A673 (cell line): ENCODE measurements at regions of chr3 and their contacts with region 1.

Region 1: DNA sequence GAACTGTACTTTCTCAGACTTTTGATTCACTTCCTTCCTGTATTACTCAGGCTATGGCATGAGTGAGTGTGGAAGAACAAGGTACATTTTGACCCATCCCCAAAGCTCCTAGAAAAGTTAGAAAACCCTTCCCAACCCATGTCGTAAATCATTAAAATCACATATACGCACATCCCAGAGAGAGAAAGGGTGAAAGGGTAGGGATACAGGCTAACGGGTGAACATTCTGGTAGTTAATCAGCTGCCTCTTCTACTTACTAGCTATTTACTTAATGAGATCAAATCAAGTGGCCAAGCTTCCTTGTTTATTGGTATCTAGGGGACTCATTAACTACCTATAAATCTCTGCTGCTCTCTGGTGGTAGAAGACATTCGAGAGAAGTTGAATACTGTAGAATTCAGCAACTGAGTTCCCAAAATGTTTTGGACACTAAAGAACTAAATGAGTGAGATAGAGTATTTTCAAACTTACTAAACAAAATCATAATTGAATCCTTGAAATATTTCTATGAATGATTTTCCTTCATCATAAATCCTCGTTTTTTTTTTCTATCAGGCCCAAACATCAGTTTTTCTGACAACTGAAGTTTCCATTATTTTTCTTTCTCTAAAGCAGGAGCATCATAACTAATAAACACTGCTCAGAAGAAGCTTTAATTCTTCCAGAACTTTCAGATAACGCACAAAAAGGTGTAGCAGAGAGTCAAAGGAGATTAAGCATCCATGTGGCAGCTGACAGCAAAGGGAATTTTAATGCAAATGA is 124.2 kb downstream of the IMPG2 start:
- DNase-seq: peak; percentile 82
- H3K4me3 ChIP-seq: no peak overlapping the region
- H3K27ac ChIP-seq: peak overlapping the region; percentile 35
- H3K4me1 ChIP-seq: peaks cover 31% of the 10 kb centered on the region
- H3K27me3 ChIP-seq: no peaks in the 10 kb centered on the region
- CTCF ChIP-seq: peak; percentile 68

Region 2: GRCh38 chr3:100463002-100463401 is 733.1 kb before region 1 on chr3:
- CTCF ChIA-PET with region 1: interaction called, 16 read pairs
- POLR2A ChIA-PET with region 1: no interaction called
- intact Hi-C with region 1: loop called (anchors 10 kb)
- DNase-seq: peak; percentile 76
- H3K4me3 ChIP-seq: no peak overlapping the region
- H3K27ac ChIP-seq: no peak overlapping the region
- H3K4me1 ChIP-seq: no peaks in the 10 kb centered on the region
- H3K27me3 ChIP-seq: no peaks in the 10 kb centered on the region
- CTCF ChIP-seq: peak; percentile 83

Region 3: GRCh38 chr3:100737334-100737733 is 458.8 kb before region 1 on chr3:
- CTCF ChIA-PET with region 1: interaction called, 3 read pairs
- POLR2A ChIA-PET with region 1: no interaction called
- intact Hi-C with region 1: loop called (anchors 5 kb)
- DNase-seq: peak; percentile 57
- H3K4me3 ChIP-seq: no peak overlapping the region
- H3K27ac ChIP-seq: no peak overlapping the region
- H3K4me1 ChIP-seq: no peaks in the 10 kb centered on the region
- H3K27me3 ChIP-seq: no peaks in the 10 kb centered on the region
- CTCF ChIP-seq: peak; percentile 54

Region 4: DNA sequence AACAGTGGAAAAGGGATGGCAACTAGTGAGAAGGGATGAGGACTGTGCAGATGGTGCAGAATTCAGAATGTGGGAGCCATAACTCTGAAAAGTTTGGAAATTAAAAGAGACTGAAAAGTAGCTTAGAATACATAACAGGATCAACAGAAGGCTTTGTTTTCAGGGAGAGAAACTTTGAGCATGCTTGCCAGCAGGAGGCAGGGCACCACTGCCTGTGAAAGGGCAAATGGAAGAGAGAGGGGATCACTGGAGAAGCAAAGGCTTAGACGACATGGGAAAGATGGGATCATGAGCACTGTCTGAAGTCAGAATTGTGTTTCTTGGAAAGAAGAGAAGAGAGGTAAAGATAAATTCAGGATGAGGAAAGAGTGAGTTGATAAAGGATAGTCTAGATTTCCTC is 302.5 kb before region 1 on chr3:
- CTCF ChIA-PET with region 1: interaction called, 20 read pairs
- POLR2A ChIA-PET with region 1: no interaction called
- intact Hi-C with region 1: loop called (anchors 1 kb)
- DNase-seq: peak; percentile 66
- H3K4me3 ChIP-seq: no peak overlapping the region
- H3K27ac ChIP-seq: no peak overlapping the region
- H3K4me1 ChIP-seq: no peaks in the 10 kb centered on the region
- H3K27me3 ChIP-seq: no peaks in the 10 kb centered on the region
- CTCF ChIP-seq: peak; percentile 75

Region 5: DNA sequence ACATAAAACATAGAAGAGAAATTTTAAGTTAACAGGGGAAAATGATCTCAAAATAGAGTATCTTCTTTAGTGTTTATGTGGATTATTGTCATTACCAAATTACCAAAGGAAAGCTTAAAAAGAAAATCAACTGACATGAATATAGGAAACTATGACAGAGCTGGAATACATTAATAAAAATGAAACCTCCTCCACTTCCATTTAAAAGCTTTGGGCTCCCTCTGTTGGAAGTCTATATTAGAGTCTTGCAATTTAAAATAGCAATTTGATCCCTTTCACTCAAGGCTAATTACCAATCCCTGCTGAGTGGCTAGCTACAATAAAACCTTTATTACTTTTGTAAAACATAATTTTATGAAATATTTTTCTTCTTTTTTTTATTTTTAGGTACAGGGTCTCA is 185.7 kb after region 1 on chr3:
- CTCF ChIA-PET with region 1: interaction called, 4 read pairs
- POLR2A ChIA-PET with region 1: no interaction called
- intact Hi-C with region 1: loop called (anchors 5 kb)
- DNase-seq: peak; percentile 77
- H3K4me3 ChIP-seq: no peak overlapping the region
- H3K27ac ChIP-seq: no peak overlapping the region
- H3K4me1 ChIP-seq: no peaks in the 10 kb centered on the region
- H3K27me3 ChIP-seq: no peaks in the 10 kb centered on the region
- CTCF ChIP-seq: peak; percentile 65